ENCODE measurements at regions of chr10 and their contacts with region 1.

Region 1: GRCh38 chr10:93554760-93555432 is 11.6 kb upstream of the FFAR4 start:
- H3K4me3 ChIP-seq: no peak overlapping the region
- H3K27ac ChIP-seq: no peak overlapping the region
- H3K4me1 ChIP-seq: no peaks in the 10 kb centered on the region
- CTCF ChIP-seq: peak; percentile 61

Region 2: DNA sequence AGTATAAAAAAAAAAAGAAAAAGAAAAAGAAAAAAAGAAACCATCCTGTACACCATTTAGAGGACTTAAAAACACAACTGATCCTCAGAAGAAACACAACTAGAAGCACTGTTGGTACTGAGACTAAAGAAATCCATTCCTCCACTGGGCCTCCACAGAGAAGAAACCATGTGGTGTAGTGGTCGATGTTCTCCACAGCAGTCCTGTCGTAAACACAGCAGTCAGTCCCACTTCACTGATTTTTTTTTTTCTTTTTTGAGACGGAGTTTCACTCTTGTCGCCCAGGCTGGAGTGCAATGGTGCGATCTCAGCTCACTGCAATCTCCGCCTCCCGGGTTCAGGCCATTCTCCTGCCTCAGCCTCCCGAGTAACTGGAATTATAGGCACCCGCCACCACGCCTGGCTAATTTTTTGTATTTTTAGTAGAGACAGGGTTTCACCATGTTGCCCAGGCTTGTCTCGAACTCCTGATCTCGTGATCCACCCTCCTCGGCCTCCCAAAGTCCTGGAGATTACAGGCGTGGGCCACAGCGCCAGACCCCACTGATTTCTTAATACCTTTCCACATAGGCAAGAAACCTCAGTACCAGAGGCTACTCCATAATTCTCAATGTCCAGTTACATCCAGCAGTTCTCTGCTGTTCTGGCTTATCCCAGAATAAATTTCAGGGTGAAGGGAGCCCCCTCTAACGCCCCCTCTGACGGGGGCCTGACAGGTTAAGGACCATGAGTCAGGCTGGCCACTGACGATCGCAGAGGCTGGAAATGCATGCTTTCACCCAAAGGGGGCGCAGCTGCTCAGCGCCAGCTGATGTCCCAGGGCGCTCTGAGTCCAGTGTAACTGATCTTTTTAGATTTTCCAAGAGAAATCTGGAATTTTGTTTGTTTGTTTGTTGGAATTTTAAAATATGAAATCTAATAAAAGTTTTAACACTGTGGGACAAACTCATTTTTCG is 13.2 kb before region 1 on chr10:
- CTCF ChIA-PET with region 1: interaction called, 27 read pairs
- POLR2A ChIA-PET with region 1: no interaction called
- H3K4me3 ChIP-seq: peak overlapping the region; percentile 37
- H3K27ac ChIP-seq: no peak overlapping the region
- H3K4me1 ChIP-seq: no peaks in the 10 kb centered on the region
- CTCF ChIP-seq: peak; percentile 78

Region 3: GRCh38 chr10:93566435-93567276 is 11.8 kb after region 1 on chr10 and contains the start of gene FFAR4:
- CTCF ChIA-PET with region 1: interaction called, 21 read pairs
- POLR2A ChIA-PET with region 1: no interaction called
- H3K4me3 ChIP-seq: peak within 1 kb of the TSS; percentile 14; the same call in 1 of the 2 replicates
- H3K27ac ChIP-seq: no peak within 1 kb of the TSS
- H3K4me1 ChIP-seq: no peaks in the 10 kb centered on the region
- CTCF ChIP-seq: 0 out of 2 replicates have a peak, but pooled peaks have one; percentile 5

Region 4: GRCh38 chr10:93576888-93577287 is 22.0 kb after region 1 on chr10:
- CTCF ChIA-PET with region 1: interaction called, 10 read pairs
- POLR2A ChIA-PET with region 1: no interaction called
- H3K4me3 ChIP-seq: no peak overlapping the region
- H3K27ac ChIP-seq: no peak overlapping the region
- H3K4me1 ChIP-seq: peaks cover 6% of the 10 kb centered on the region; the same call in 1 of the 2 replicates
- CTCF ChIP-seq: no peak

Region 5: DNA sequence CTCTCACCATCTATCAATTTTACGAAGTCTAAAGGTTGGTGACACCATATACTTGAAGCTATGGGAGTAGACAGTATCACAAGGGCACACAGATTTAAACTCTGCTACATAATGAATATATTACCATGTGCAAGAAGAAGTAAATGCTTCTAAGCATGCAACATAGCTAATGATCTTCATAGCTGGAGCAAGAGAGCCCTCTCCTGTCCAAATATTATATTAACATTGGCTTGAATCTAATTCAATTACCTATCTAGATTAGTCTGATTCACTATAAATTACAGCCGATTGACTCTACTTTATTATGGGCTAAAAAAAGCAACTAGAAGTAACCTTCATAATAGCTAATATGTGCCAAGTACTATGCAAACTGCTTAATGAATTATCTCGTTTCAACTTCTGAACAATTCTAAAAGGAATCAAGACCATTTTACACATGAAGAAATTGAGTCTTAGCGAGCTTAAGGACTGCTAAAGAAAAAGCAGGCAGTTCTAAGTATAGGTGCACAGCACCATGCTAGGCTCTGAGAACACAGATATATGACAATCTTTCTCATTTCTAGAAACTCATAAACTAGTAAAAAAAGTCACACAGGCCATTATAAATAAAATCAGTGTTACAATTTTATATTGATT is 125.6 kb after region 1 on chr10:
- CTCF ChIA-PET with region 1: interaction called, 110 read pairs
- POLR2A ChIA-PET with region 1: interaction called, 3 read pairs
- H3K4me3 ChIP-seq: no peak overlapping the region
- H3K27ac ChIP-seq: no peak overlapping the region
- H3K4me1 ChIP-seq: no peaks in the 10 kb centered on the region
- CTCF ChIP-seq: 0 out of 2 replicates have a peak, but pooled peaks have one; percentile 13

Region 6: DNA sequence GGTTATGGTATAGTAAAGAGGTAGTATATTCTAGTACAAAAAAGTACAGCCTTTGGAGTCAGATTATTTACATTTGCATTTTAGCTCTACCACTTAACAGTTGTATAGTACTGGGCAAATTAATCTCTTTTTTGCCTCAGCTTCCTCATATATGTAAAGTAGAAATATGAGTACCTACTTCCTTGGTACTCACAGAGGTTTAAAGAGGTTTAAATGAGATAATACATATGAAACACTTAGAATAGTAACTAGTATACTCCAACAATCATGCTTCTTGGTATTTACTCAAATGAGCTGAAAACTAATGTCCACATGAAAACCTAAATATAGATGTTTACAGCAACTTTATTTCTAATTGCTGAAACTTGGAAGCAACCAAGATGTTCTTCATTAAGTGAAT is 132.8 kb after region 1 on chr10:
- CTCF ChIA-PET with region 1: interaction called, 110 read pairs
- POLR2A ChIA-PET with region 1: no interaction called
- H3K4me3 ChIP-seq: no peak overlapping the region
- H3K27ac ChIP-seq: no peak overlapping the region
- H3K4me1 ChIP-seq: no peaks in the 10 kb centered on the region
- CTCF ChIP-seq: no peak